HEK293 (cell line): ENCODE measurements at regions of chr3 and their contacts with region 1.

Region 1: GRCh38 chr3:2166552-2166951 is 67.9 kb downstream of the CNTN4 start:
- H3K4me3 ChIP-seq: no peak overlapping the region
- H3K27ac ChIP-seq: no peak overlapping the region
- H3K4me1 ChIP-seq: no peaks in the 10 kb centered on the region
- CTCF ChIP-seq: no peak

Region 2: GRCh38 chr3:2156244-2156847 is 10.2 kb before region 1 on chr3:
- CTCF ChIA-PET with region 1: interaction called, 19 read pairs
- POLR2A ChIA-PET with region 1: no interaction called
- H3K4me3 ChIP-seq: no peak overlapping the region
- H3K27ac ChIP-seq: no peak overlapping the region
- H3K4me1 ChIP-seq: no peaks in the 10 kb centered on the region
- CTCF ChIP-seq: no peak